PC-9 (cell line): ENCODE measurements at regions of chr6 and their contacts with region 1.

Region 1: GRCh38 chr6:54758350-54758749 is 88.2 kb upstream of the FAM83B start:
- DNase-seq: no peak
- H3K4me3 ChIP-seq: no peak overlapping the region
- H3K27ac ChIP-seq: no peak overlapping the region
- H3K4me1 ChIP-seq: no peaks in the 10 kb centered on the region
- H3K27me3 ChIP-seq: no peaks in the 10 kb centered on the region
- CTCF ChIP-seq: no peak

Region 2: GRCh38 chr6:54718541-54719023 is 39.8 kb before region 1 on chr6:
- CTCF ChIA-PET with region 1: no interaction called
- POLR2A ChIA-PET with region 1: no interaction called
- intact Hi-C with region 1: no loop called
- DNase-seq: no peak
- H3K4me3 ChIP-seq: no peak overlapping the region
- H3K27ac ChIP-seq: no peak overlapping the region
- H3K4me1 ChIP-seq: no peaks in the 10 kb centered on the region
- H3K27me3 ChIP-seq: no peaks in the 10 kb centered on the region
- CTCF ChIP-seq: no peak

Region 3: GRCh38 chr6:54784011-54784410 is 25.7 kb after region 1 on chr6:
- CTCF ChIA-PET with region 1: no interaction called
- POLR2A ChIA-PET with region 1: interaction called, 12 read pairs
- intact Hi-C with region 1: no loop called
- DNase-seq: no peak
- H3K4me3 ChIP-seq: no peak overlapping the region
- H3K27ac ChIP-seq: no peak overlapping the region
- H3K4me1 ChIP-seq: no peaks in the 10 kb centered on the region
- H3K27me3 ChIP-seq: no peaks in the 10 kb centered on the region
- CTCF ChIP-seq: no peak

Region 4: GRCh38 chr6:54935739-54936138 is 177.4 kb after region 1 on chr6:
- CTCF ChIA-PET with region 1: interaction called, 14 read pairs
- POLR2A ChIA-PET with region 1: no interaction called
- intact Hi-C with region 1: no loop called
- DNase-seq: peak; percentile 40 to 88
- H3K4me3 ChIP-seq: no peak overlapping the region
- H3K27ac ChIP-seq: peak overlapping the region; percentile 77
- H3K4me1 ChIP-seq: peaks cover 19% of the 10 kb centered on the region
- H3K27me3 ChIP-seq: no peaks in the 10 kb centered on the region
- CTCF ChIP-seq: no peak